Cardiac septum (tissue), 1 donor: ENCODE measurements at regions of chr15 and their contacts with region 1.

Region 1: DNA sequence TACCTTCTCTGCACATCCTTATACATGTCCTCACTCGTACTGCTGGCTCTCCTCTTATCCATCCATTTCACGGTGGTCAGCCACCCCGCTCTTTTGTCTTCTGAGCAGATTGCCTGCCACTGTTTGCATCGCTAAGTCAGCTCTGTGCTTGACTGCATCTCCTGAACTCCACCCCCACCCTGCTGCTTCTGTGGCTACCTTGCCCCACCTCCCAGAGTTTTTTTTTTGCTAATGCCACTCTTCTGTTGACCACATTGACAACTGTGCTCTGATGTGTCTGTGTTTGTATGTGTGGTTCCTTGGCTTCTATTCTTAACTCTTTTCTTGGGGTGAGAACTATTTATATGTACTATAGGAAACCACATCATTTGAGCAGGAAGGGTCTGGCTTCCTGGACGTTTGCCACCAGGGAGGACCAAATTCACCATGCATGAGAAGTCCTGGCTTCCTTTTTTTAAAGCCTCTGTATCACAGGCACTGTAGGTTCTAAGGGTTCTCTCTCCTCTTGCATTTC is 12.8 kb upstream of the MTMR10 start:
- DNase-seq: peak; percentile 84

Region 2: DNA sequence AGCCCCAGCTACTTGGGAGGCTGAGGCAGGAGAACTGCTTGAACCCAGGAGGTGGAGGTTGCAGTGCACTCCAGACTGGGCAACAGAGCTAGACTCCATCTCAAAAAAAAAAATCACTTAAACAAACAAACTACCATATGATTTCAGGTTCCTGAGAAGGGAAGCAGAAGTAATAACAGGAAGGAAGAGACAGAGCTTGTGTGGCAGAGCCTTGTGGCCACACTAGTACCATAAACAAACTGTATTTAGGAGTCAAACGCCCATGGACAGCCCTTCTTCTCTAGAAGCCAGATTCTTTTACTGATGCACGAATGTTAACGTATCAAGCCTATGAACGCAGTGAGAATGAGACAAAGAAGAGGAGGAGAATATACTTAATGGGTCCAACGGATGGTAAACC is 24.8 kb before region 1 on chr15:
- intact Hi-C with region 1: no loop called
- DNase-seq: no peak

Region 3: GRCh38 chr15:31069360-31070000 is 65.2 kb after region 1 on chr15:
- intact Hi-C with region 1: loop called (anchors 10 kb)
- DNase-seq: no peak

Region 4: GRCh38 chr15:31098953-31099740 is 94.9 kb after region 1 on chr15:
- intact Hi-C with region 1: no loop called
- DNase-seq: no peak

Region 5: GRCh38 chr15:31215490-31216214 is 211.4 kb after region 1 on chr15:
- intact Hi-C with region 1: no loop called
- DNase-seq: peak; percentile 95

Region 6: GRCh38 chr15:32091505-32092380 is 1087.5 kb after region 1 on chr15:
- intact Hi-C with region 1: no loop called
- DNase-seq: no peak